Activated CD8-positive, alpha-beta T cell treated with anti-CD3 and anti-CD28 coated beads, Interleukin-2, amount 10 ng/mL, durations not matched to agents 7 days and 5 days (primary cell): ENCODE measurements at regions of chr12 and their contacts with region 1.

Region 1: DNA sequence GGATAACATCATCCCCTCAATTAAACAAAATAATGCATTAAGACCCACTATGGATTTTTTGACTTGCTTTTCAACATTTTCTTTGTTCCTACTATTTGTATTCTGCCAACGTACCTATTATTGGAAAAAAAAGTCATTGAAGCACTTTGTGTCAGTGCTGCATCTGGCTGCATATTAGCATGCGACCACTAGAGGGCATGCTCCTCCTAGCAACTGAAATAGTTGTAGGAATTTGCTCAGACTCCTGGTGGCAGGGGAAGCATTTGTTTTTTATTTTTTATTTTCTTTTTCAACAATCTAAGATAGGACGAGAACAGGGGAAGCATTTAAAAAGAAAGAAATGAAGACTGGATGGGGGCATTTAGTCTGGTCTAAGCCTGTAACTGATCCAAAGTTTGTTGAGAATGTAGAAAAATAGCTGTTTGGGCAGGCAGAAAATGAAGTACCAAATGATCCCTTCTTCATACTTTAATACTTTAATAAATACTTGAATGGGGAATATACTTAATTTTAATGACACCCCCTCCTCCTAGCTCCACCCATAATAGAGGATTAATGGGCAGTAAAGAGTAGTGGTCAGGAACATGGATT is 14.5 kb upstream of the CLEC4A start:
- DNase-seq: peak; percentile 86
- ATAC-seq: peak; percentile 61
- H3K4me3 Mint-ChIP-seq: no peak overlapping the region
- H3K27ac Mint-ChIP-seq: no peak overlapping the region
- H3K4me1 Mint-ChIP-seq: peaks cover 10% of the 10 kb centered on the region
- H3K27me3 Mint-ChIP-seq: no peaks in the 10 kb centered on the region

Region 2: GRCh38 chr12:8018666-8019581 is 90.0 kb before region 1 on chr12:
- CTCF ChIA-PET with region 1: no interaction called
- POLR2A ChIA-PET with region 1: no interaction called
- DNase-seq: peak; percentile 41
- ATAC-seq: peak; percentile 78
- H3K4me3 Mint-ChIP-seq: peak overlapping the region; percentile 42
- H3K27ac Mint-ChIP-seq: no peak overlapping the region
- H3K4me1 Mint-ChIP-seq: peaks cover 7% of the 10 kb centered on the region
- H3K27me3 Mint-ChIP-seq: peaks cover 32% of the 10 kb centered on the region

Region 3: GRCh38 chr12:8088574-8088973 is 20.3 kb before region 1 on chr12:
- CTCF ChIA-PET with region 1: interaction called, 21 read pairs
- POLR2A ChIA-PET with region 1: no interaction called
- DNase-seq: peak; percentile 64
- ATAC-seq: peak; percentile 86
- H3K4me3 Mint-ChIP-seq: peak overlapping the region; percentile 64
- H3K27ac Mint-ChIP-seq: peak overlapping the region; percentile 92
- H3K4me1 Mint-ChIP-seq: peaks cover 55% of the 10 kb centered on the region
- H3K27me3 Mint-ChIP-seq: no peaks in the 10 kb centered on the region

Region 4: GRCh38 chr12:8096281-8096915 is 12.5 kb before region 1 on chr12:
- CTCF ChIA-PET with region 1: interaction called, 21 read pairs
- POLR2A ChIA-PET with region 1: no interaction called
- DNase-seq: no peak
- ATAC-seq: no peak
- H3K4me3 Mint-ChIP-seq: no peak overlapping the region
- H3K27ac Mint-ChIP-seq: no peak overlapping the region
- H3K4me1 Mint-ChIP-seq: peaks cover 7% of the 10 kb centered on the region
- H3K27me3 Mint-ChIP-seq: no peaks in the 10 kb centered on the region

Region 5: DNA sequence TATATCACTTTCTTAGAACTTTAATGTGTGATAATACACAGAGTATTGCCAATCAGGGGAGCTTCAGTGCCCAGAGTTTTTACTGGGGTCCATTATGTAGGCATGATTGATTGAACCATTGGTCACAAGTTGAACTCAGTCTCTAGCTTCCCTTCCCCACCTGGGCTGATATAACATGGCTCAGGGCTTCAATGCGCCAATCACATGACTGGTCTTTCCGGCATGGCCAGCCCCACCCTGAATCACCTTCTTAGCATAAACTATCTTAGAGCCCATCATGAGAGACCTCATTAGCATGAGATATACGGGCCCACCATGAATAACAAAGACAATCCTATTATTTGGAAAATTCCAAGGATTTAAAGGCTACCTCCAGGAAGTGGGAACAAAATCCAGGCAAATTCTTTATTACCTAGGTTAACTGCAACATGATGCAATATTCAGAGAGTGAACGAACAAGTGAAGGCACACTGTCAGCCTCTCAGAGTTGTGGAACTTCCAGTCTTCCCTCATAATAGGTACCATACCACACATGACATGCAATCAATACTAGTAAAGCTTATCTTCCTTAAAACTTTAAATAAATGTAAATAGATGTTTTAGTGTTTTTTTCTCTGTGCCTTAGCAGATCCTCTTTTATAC is 11.3 kb after region 1 on chr12:
- CTCF ChIA-PET with region 1: interaction called, 15 read pairs
- POLR2A ChIA-PET with region 1: no interaction called
- DNase-seq: no peak
- ATAC-seq: no peak
- H3K4me3 Mint-ChIP-seq: no peak overlapping the region
- H3K27ac Mint-ChIP-seq: no peak overlapping the region
- H3K4me1 Mint-ChIP-seq: peaks cover 2% of the 10 kb centered on the region
- H3K27me3 Mint-ChIP-seq: no peaks in the 10 kb centered on the region

Region 6: GRCh38 chr12:8154526-8154925 is 45.6 kb after region 1 on chr12:
- CTCF ChIA-PET with region 1: interaction called, 13 read pairs
- POLR2A ChIA-PET with region 1: no interaction called
- DNase-seq: no peak
- ATAC-seq: no peak
- H3K4me3 Mint-ChIP-seq: no peak overlapping the region
- H3K27ac Mint-ChIP-seq: no peak overlapping the region
- H3K4me1 Mint-ChIP-seq: peaks cover 22% of the 10 kb centered on the region
- H3K27me3 Mint-ChIP-seq: peaks cover 43% of the 10 kb centered on the region

Region 7: GRCh38 chr12:8226355-8226754 is 117.5 kb after region 1 on chr12:
- CTCF ChIA-PET with region 1: interaction called, 41 read pairs
- POLR2A ChIA-PET with region 1: no interaction called
- DNase-seq: no peak
- ATAC-seq: no peak
- H3K4me3 Mint-ChIP-seq: no peak overlapping the region
- H3K27ac Mint-ChIP-seq: no peak overlapping the region
- H3K4me1 Mint-ChIP-seq: peaks cover 3% of the 10 kb centered on the region
- H3K27me3 Mint-ChIP-seq: no peaks in the 10 kb centered on the region